ENCODE measurements at regions of chr18 and their contacts with region 1.

Region 1: DNA sequence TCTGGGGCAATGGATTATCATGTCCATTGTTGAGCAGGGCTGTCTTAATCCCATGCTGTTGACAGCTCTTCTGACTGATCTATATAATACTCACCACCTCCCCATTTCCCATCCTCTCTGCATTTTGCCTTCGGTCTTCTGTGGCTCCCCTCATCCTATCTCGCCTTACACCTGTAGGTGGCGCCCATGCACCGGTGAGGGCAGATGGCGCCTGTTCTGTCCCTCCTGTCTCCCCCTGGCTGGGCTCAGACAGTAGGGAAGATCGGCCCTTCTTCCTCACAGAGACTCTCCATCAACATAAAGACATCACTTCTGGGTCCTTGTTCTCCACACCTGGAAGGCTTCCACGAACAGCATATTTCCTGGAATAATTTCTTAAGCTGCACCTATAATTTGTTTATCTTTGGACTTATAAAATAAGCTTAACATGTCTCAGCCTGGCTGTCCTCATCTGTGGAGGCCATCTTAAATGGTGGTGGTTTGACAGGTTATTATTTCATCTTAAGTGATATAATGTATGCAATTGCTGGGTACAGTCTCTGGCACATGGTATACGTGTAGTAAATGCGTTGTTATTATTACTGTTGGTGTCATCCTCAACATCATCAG is 10.9 kb upstream of the CDH20 start:
- DNase-seq: peak; percentile 32 to 76 (median 73)
- ATAC-seq: peak; percentile 79
- H3K4me3 ChIP-seq: no peak overlapping the region
- H3K4me1 ChIP-seq: no peaks in the 10 kb centered on the region
- CTCF ChIP-seq: peak; percentile 45

Region 2: GRCh38 chr18:61127714-61128467 is 194.5 kb before region 1 on chr18:
- intact Hi-C with region 1: no loop called
- DNase-seq: no peak
- ATAC-seq: no peak
- H3K4me3 ChIP-seq: no peak overlapping the region
- H3K4me1 ChIP-seq: no peaks in the 10 kb centered on the region
- CTCF ChIP-seq: no peak

Region 3: GRCh38 chr18:61502472-61502871 is 180.1 kb after region 1 on chr18:
- intact Hi-C with region 1: loop called in 1 of 2 experiments (anchors 5 kb)
- DNase-seq: peak in 1 of 3 donors; percentile 69
- ATAC-seq: peak; percentile 54
- H3K4me3 ChIP-seq: no peak overlapping the region
- H3K4me1 ChIP-seq: no peaks in the 10 kb centered on the region
- CTCF ChIP-seq: peak; percentile 19

Measured in mucosa of descending colon (tissue), 3 donors.